Ovary (tissue), 10 donors: ENCODE measurements at regions of chr12 and their contacts with region 1.

Region 1: GRCh38 chr12:92136965-92137721 is 8.5 kb downstream of the BTG1 start:
- DNase-seq: no peak
- H3K4me3 ChIP-seq: peak overlapping the region; percentile 100
- H3K27ac ChIP-seq: no peak overlapping the region
- H3K4me1 ChIP-seq: peaks cover 8% of the 10 kb centered on the region
- H3K27me3 ChIP-seq: no peaks in the 10 kb centered on the region
- CTCF ChIP-seq: no peak
- EP300 ChIP-seq: no peak
- POLR2A ChIP-seq: no peak

Region 2: DNA sequence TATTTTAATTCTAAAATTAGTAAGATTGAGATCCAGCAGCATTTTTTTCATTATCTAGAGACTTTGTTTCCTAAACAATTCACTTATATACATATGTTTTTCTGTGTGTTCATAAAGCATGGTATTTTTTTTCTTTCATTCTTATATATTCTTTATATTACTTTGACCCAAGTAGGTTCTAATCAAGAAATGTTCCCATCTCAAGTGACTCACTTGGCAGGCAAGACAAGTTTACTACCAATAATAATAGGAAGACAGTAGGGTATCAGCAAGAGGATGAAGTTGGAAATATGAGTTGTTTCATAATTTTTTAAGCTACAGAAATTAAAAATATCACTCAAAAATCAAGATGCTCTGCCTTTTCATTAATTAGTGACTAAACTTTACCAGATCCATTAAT is 1815.1 kb before region 1 on chr12:
- intact Hi-C with region 1: no loop called
- DNase-seq: no peak
- H3K4me3 ChIP-seq: no peak overlapping the region
- H3K27ac ChIP-seq: no peak overlapping the region
- H3K4me1 ChIP-seq: no peaks in the 10 kb centered on the region
- H3K27me3 ChIP-seq: no peaks in the 10 kb centered on the region
- CTCF ChIP-seq: no peak
- EP300 ChIP-seq: no peak
- POLR2A ChIP-seq: no peak

Region 3: GRCh38 chr12:91974512-91975085 is 162.5 kb before region 1 on chr12:
- intact Hi-C with region 1: no loop called
- DNase-seq: no peak
- H3K4me3 ChIP-seq: no peak overlapping the region
- H3K27ac ChIP-seq: no peak overlapping the region
- H3K4me1 ChIP-seq: peaks cover 1% of the 10 kb centered on the region
- H3K27me3 ChIP-seq: no peaks in the 10 kb centered on the region
- CTCF ChIP-seq: no peak
- EP300 ChIP-seq: no peak
- POLR2A ChIP-seq: no peak

Region 4: GRCh38 chr12:92034858-92035401 is 102.2 kb before region 1 on chr12:
- intact Hi-C with region 1: loop called in 1 of 4 experiments (anchors 10 kb)
- DNase-seq: peak; percentile 48 to 73 (median 62)
- H3K4me3 ChIP-seq: peak overlapping the region; percentile 30
- H3K27ac ChIP-seq: no peak overlapping the region
- H3K4me1 ChIP-seq: peaks cover 3% of the 10 kb centered on the region
- H3K27me3 ChIP-seq: no peaks in the 10 kb centered on the region
- CTCF ChIP-seq: no peak
- EP300 ChIP-seq: no peak
- POLR2A ChIP-seq: no peak

Region 5: DNA sequence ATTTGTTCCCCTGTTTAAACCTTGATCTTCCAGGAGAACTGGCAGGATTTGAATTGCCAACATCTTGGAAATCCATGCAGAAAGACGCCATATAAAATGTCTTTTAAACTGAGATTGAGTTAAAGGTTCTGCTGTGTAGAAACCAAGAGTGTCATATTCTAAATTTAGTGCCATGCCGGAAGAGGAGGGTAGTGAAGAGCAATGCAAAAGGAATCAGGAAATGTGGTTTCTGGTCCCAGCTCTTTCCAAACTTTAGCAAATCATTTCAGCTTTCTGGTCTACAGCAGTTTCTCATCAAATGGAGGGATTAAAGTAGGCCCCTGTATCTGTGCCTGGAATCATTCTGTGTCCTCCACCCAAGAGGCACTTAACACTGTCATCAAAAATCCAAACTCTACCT is 77.2 kb before region 1 on chr12:
- intact Hi-C with region 1: loop called in 1 of 4 experiments (anchors 2 kb)
- DNase-seq: no peak
- H3K4me3 ChIP-seq: no peak overlapping the region
- H3K27ac ChIP-seq: no peak overlapping the region
- H3K4me1 ChIP-seq: peaks cover 2% of the 10 kb centered on the region
- H3K27me3 ChIP-seq: no peaks in the 10 kb centered on the region
- CTCF ChIP-seq: no peak
- EP300 ChIP-seq: no peak
- POLR2A ChIP-seq: no peak

Region 6: GRCh38 chr12:92070054-92070863 is 66.9 kb before region 1 on chr12:
- intact Hi-C with region 1: no loop called
- DNase-seq: peak in 1 of 5 donors; percentile 47
- H3K4me3 ChIP-seq: no peak overlapping the region
- H3K27ac ChIP-seq: no peak overlapping the region
- H3K4me1 ChIP-seq: no peaks in the 10 kb centered on the region
- H3K27me3 ChIP-seq: no peaks in the 10 kb centered on the region
- CTCF ChIP-seq: no peak
- EP300 ChIP-seq: no peak
- POLR2A ChIP-seq: no peak